ENCODE measurements at regions of chr10 and their contacts with region 1.

Region 1: GRCh38 chr10:3172446-3173170 is at the start of gene PITRM1:
- DNase-seq: peak; percentile 97 to 99
- ATAC-seq: peak; percentile 94 to 98
- H3K4me3 ChIP-seq: peak within 1 kb of the TSS; percentile 82
- H3K27ac ChIP-seq: peak within 1 kb of the TSS; percentile 78 to 93
- H3K4me1 ChIP-seq: peaks cover 10% of the 10 kb centered on the region; the same call in 1 of the 3 replicates
- CTCF ChIP-seq: no peak
- EP300 ChIP-seq: no peak
- POLR2A ChIP-seq: peak; percentile 99
- RAD21 ChIP-seq: 0 out of 5 replicates have a peak, but pooled peaks of 1 of the 2 experiments have one; percentile 11
- polyA plus RNA-seq, gene PITRM1: 45.9 and 62.3 TPM in 2 replicates

Region 2: GRCh38 chr10:2658780-2659179 is 513.8 kb before region 1 on chr10:
- CTCF ChIA-PET with region 1: no interaction called
- POLR2A ChIA-PET with region 1: no interaction called
- DNase-seq: no peak
- ATAC-seq: no peak
- H3K4me3 ChIP-seq: no peak overlapping the region
- H3K27ac ChIP-seq: no peak overlapping the region
- H3K4me1 ChIP-seq: no peaks in the 10 kb centered on the region
- CTCF ChIP-seq: no peak
- EP300 ChIP-seq: no peak
- POLR2A ChIP-seq: no peak
- RAD21 ChIP-seq: no peak

Region 3: GRCh38 chr10:3107426-3107961 is 65.1 kb before region 1 on chr10:
- CTCF ChIA-PET with region 1: no interaction called
- POLR2A ChIA-PET with region 1: interaction called, 10 read pairs
- DNase-seq: peak; percentile 88 to 95
- ATAC-seq: peak; percentile 78 to 80
- H3K4me3 ChIP-seq: peak overlapping the region; percentile 15; the same call in 1 of the 3 replicates
- H3K27ac ChIP-seq: peak overlapping the region; percentile 86 to 92
- H3K4me1 ChIP-seq: peaks cover 94% of the 10 kb centered on the region
- CTCF ChIP-seq: no peak
- EP300 ChIP-seq: peak; percentile 82 to 96; a peak in 3 of 5 replicates
- POLR2A ChIP-seq: no peak
- RAD21 ChIP-seq: peak; percentile 4 to 42; a peak in 2 of 5 replicates

Region 4: GRCh38 chr10:3151889-3152565 is 20.6 kb before region 1 on chr10:
- CTCF ChIA-PET with region 1: interaction called, 3 read pairs
- POLR2A ChIA-PET with region 1: interaction called, 10 read pairs
- DNase-seq: no peak
- ATAC-seq: no peak; a peak in 2 of 6 replicates
- H3K4me3 ChIP-seq: no peak overlapping the region
- H3K27ac ChIP-seq: no peak overlapping the region
- H3K4me1 ChIP-seq: no peaks in the 10 kb centered on the region
- CTCF ChIP-seq: no peak
- EP300 ChIP-seq: no peak
- POLR2A ChIP-seq: no peak
- RAD21 ChIP-seq: no peak

Region 5: DNA sequence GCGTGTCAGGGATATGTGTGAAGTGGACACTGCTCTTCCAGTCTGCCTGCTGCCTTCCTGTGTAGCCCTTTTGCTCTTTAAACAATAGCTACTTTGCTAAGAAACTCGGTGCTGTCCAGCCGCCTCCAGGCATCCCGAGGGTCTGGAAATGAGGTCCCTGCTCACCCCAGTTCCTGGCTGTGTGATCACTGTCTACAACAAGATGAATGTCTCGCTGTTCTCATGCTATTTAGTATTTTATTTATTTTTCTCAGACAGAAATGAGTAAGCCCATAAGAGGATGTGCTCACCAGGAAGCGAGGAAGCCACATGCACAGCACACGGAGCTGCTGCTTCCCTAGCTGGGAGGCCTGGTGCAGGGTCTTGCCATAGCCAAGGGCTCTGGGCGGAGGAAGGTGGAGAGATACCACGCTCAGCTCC is 166.9 kb after region 1 on chr10:
- CTCF ChIA-PET with region 1: no interaction called
- POLR2A ChIA-PET with region 1: no interaction called
- DNase-seq: no peak
- ATAC-seq: peak in 1 of 2 experiments; percentile 43; a peak in 1 of 6 replicates
- H3K4me3 ChIP-seq: no peak overlapping the region
- H3K27ac ChIP-seq: no peak overlapping the region
- H3K4me1 ChIP-seq: peaks cover 6% of the 10 kb centered on the region; the same call in 1 of the 3 replicates
- CTCF ChIP-seq: no peak
- EP300 ChIP-seq: no peak
- POLR2A ChIP-seq: no peak
- RAD21 ChIP-seq: no peak

Region 6: GRCh38 chr10:3408603-3409365 is 236.2 kb after region 1 on chr10:
- CTCF ChIA-PET with region 1: no interaction called
- POLR2A ChIA-PET with region 1: no interaction called
- DNase-seq: no peak
- ATAC-seq: no peak
- H3K4me3 ChIP-seq: no peak overlapping the region
- H3K27ac ChIP-seq: no peak overlapping the region
- H3K4me1 ChIP-seq: no peaks in the 10 kb centered on the region
- CTCF ChIP-seq: no peak
- EP300 ChIP-seq: no peak
- POLR2A ChIP-seq: no peak
- RAD21 ChIP-seq: no peak